GM12878 (cell line): ENCODE measurements at regions of chr7 and their contacts with region 1.

Region 1: DNA sequence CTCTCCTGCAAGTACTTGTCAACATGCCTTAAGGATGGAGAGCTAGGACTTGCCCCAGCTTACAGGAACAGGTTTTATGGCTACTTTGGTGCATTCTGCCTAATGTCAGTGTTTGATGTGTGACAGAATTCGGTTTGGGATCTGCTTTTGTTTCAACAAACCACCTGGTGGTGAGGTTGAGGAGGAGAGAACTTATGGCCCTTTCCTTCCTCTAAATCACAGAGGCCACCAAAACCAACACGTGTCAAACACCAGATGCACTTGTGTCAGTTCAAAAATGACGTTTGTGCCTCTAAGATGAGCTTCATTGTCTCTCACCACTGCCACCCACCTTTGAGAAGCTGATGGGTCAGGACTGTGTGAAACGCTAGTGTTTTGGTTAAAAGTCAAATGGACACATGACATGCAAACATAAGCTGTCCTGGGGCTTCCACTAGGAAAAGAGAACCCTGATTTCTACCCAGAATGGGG is 83.9 kb downstream of the OSBPL3 start:
- DNase-seq: peak; percentile 52
- ATAC-seq: peak; percentile 70
- H3K4me3 ChIP-seq: no peak overlapping the region
- H3K27ac ChIP-seq: peak overlapping the region; percentile 75
- H3K4me1 ChIP-seq: peaks cover 57% of the 10 kb centered on the region
- H3K27me3 ChIP-seq: no peaks in the 10 kb centered on the region
- CTCF ChIP-seq: peak in 1 of 3 experiments; percentile 45; a peak in 2 of 6 replicates
- EP300 ChIP-seq: peak; percentile 55 to 79; a peak in 3 of 4 replicates
- POLR2A ChIP-seq: no peak
- RAD21 ChIP-seq: peak; percentile 40; the same call in 1 of the 2 replicates

Region 2: GRCh38 chr7:24836084-24836483 is 60.0 kb before region 1 on chr7:
- CTCF ChIA-PET with region 1: interaction called, 3 read pairs
- POLR2A ChIA-PET with region 1: interaction called, 3 read pairs
- RAD21 ChIA-PET with region 1: interaction called, 3 read pairs
- SMC1A ChIA-PET with region 1: interaction called, 14 read pairs
- in situ Hi-C with region 1: no loop called
- intact Hi-C with region 1: no loop called
- DNase-seq: peak; percentile 76
- ATAC-seq: peak; percentile 85
- H3K4me3 ChIP-seq: 0 out of 2 replicates have a peak overlapping the region, but pooled peaks have one; percentile 9
- H3K27ac ChIP-seq: peak overlapping the region; percentile 29; the same call in 1 of the 2 replicates
- H3K4me1 ChIP-seq: peaks cover 48% of the 10 kb centered on the region
- H3K27me3 ChIP-seq: no peaks in the 10 kb centered on the region
- CTCF ChIP-seq: no peak
- EP300 ChIP-seq: peak; percentile 60 to 70; a peak in 3 of 4 replicates
- POLR2A ChIP-seq: no peak
- RAD21 ChIP-seq: no peak

Region 3: GRCh38 chr7:24882989-24883621 is 13.0 kb before region 1 on chr7:
- CTCF ChIA-PET with region 1: interaction called, 38 read pairs
- POLR2A ChIA-PET with region 1: interaction called, 12 read pairs
- RAD21 ChIA-PET with region 1: interaction called, 23 read pairs
- SMC1A ChIA-PET with region 1: interaction called, 61 read pairs
- in situ Hi-C with region 1: no loop called
- intact Hi-C with region 1: no loop called
- DNase-seq: no peak
- ATAC-seq: no peak
- H3K4me3 ChIP-seq: no peak overlapping the region
- H3K27ac ChIP-seq: no peak overlapping the region
- H3K4me1 ChIP-seq: 0 out of 2 replicates have a peak, but pooled peaks cover 6% of the 10 kb centered on the region
- H3K27me3 ChIP-seq: no peaks in the 10 kb centered on the region
- CTCF ChIP-seq: no peak
- EP300 ChIP-seq: no peak
- POLR2A ChIP-seq: no peak
- RAD21 ChIP-seq: no peak

Region 4: GRCh38 chr7:26061688-26062150 is 1165.7 kb after region 1 on chr7:
- CTCF ChIA-PET with region 1: no interaction called
- POLR2A ChIA-PET with region 1: no interaction called
- RAD21 ChIA-PET with region 1: no interaction called
- SMC1A ChIA-PET with region 1: no interaction called
- in situ Hi-C with region 1: no loop called
- intact Hi-C with region 1: no loop called
- DNase-seq: peak; percentile 37
- ATAC-seq: peak; percentile 98
- H3K4me3 ChIP-seq: no peak overlapping the region
- H3K27ac ChIP-seq: no peak overlapping the region
- H3K4me1 ChIP-seq: no peaks in the 10 kb centered on the region
- H3K27me3 ChIP-seq: no peaks in the 10 kb centered on the region; a peak in 1 of 4 replicates
- CTCF ChIP-seq: peak; percentile 86 to 87 (median 87)
- EP300 ChIP-seq: no peak
- POLR2A ChIP-seq: no peak
- RAD21 ChIP-seq: peak; percentile 90